Right cardiac atrium (tissue), 5 donors: ENCODE measurements at regions of chr11 and their contacts with region 1.

Region 1: DNA sequence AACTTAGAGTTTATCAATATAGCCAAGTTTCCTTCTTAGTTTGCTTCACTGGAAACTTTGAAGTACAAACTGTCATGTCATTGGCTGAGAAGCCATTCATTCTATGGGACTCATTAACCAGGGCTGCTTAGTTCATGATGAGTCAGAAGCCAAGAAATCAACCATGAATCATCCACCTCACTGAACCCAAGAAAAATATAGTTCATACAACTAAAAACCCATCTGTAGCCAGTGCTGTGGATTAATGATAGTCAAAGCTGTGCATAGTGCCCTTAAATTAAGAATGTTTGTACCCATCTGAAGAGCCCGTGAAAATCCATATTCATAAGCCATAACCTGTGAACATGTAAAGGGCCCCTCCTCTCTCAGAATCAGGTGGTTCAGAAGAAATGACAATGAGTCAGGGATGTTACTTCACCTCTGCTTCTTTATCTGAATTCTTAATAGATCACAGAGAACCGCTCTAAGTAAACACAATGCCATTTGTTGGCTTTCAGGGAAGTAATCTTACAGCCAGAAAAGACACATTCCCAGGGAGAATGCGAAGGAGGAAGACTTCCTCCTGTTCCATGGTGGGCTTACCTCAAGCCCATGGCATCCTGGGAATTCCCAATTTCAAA is 25.4 kb downstream of the MMP20 start:
- DNase-seq: no peak
- ATAC-seq: peak in 1 of 2 donors; percentile 61
- H3K4me3 ChIP-seq: no peak overlapping the region
- H3K27ac ChIP-seq: no peak overlapping the region
- H3K4me1 ChIP-seq: peaks cover 2% of the 10 kb centered on the region
- H3K27me3 ChIP-seq: no peaks in the 10 kb centered on the region

Region 2: GRCh38 chr11:102346748-102347461 is 252.8 kb before region 1 on chr11 and contains the start of gene BIRC2:
- intact Hi-C with region 1: loop called in 2 of 4 experiments (anchors 10 kb)
- DNase-seq: peak; percentile 96 to 99 (median 98)
- ATAC-seq: peak; percentile 98
- H3K4me3 ChIP-seq: peak within 1 kb of the TSS; percentile 97
- H3K27ac ChIP-seq: peak within 1 kb of the TSS; percentile 89
- H3K4me1 ChIP-seq: no peaks in the 10 kb centered on the region
- H3K27me3 ChIP-seq: no peaks in the 10 kb centered on the region
- total RNA-seq, gene BIRC2: 29.6 to 35.0 (median 31.9) TPM